ENCODE measurements at regions of chr14 and their contacts with region 1.

Region 1: DNA sequence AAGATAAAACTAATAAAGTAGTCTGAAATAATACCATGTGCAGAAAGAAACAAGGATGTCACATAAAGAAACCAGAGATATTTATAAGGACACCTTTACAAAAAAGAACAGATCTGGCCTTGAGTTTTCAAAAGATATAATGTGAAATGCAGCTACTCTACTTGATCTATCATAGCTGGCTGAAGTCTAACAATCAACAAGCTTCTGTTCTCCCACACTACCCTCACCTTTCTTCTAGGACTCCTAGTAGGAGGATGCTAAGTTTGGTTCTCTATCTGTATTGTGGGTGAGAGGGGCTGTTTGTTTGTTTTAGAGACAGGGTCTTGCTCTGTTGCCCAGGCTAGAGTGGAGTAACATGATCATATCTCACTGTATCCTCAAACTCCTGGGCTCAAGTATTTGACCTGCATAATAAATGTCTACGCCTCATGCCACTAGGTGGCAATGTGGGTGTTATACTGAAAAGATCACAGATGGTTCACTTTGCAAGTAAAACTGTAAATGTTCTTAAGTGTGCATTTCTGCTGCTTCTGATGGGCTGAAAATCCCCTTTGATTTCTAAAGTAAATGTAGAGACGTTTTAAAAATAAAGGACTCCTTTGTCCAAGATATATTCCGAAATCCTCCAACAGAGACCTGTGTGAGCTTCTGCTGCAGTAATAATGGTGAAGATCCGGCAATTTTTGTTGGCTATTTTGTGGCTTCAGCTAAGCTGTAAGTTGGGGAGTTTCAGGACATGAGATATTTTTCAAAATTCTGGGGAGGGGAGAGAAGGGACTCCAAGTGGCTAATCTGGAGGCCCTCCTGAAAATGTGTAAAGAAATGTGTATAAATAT is 269.3 kb downstream of the DAD1 start:
- DNase-seq: peak in 2 of 3 donors; percentile 31 to 67
- ATAC-seq: peak in 1 of 2 donors; percentile 59
- H3K4me3 ChIP-seq: no peak overlapping the region
- H3K27ac ChIP-seq: no peak overlapping the region
- H3K4me1 ChIP-seq: no peaks in the 10 kb centered on the region
- H3K27me3 ChIP-seq: no peaks in the 10 kb centered on the region

Region 2: DNA sequence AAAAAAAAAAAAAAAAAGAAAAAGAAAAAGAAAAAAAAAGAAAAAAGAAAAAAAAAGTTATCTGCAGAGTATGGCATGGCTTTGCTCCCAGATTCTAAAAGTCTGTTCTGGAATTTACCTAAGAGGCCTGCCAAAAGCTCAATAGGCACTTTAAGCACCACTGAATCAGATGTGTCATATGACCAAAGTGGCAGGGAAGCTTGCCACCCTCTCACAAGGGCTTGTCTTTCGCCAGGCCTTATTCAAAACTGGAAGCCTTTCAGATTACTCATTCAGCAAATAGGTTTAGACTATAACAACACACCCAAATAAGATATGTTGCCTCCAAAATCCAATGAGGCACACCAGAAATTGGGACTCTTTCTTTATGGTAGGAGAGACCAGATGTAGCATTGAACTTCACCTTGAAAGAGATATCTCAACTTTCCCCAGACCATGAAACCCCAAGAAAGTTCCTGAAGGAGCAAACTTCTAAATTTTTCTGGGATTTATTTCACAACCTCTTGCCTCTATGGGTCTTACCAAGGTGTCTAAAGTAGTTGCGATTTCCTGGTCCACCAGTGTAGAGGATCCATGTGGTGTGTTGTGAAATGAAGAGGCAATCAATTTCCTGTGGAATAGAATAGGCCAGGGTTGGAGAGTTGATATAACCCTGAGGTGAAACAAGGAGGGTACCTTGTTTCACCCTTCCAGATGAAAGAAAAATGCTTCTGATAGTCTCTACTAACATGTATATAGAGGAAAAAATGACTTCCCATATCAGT is 50.5 kb after region 1 on chr14:
- intact Hi-C with region 1: loop called in 3 of 4 experiments (anchors 2 to 5 kb)
- DNase-seq: peak in 2 of 3 donors; percentile 37 to 41
- ATAC-seq: peak; percentile 71
- H3K4me3 ChIP-seq: no peak overlapping the region
- H3K27ac ChIP-seq: no peak overlapping the region
- H3K4me1 ChIP-seq: no peaks in the 10 kb centered on the region
- H3K27me3 ChIP-seq: no peaks in the 10 kb centered on the region

Region 3: GRCh38 chr14:22375321-22375930 is 55.7 kb after region 1 on chr14:
- intact Hi-C with region 1: loop called (anchors 2 to 5 kb)
- DNase-seq: no peak
- ATAC-seq: no peak
- H3K4me3 ChIP-seq: no peak overlapping the region
- H3K27ac ChIP-seq: no peak overlapping the region
- H3K4me1 ChIP-seq: no peaks in the 10 kb centered on the region
- H3K27me3 ChIP-seq: no peaks in the 10 kb centered on the region

Measured in right cardiac atrium (tissue), 5 donors.